Adrenal gland (tissue), 19 donors: ENCODE measurements at regions of chr1 and their contacts with region 1.

Region 1: DNA sequence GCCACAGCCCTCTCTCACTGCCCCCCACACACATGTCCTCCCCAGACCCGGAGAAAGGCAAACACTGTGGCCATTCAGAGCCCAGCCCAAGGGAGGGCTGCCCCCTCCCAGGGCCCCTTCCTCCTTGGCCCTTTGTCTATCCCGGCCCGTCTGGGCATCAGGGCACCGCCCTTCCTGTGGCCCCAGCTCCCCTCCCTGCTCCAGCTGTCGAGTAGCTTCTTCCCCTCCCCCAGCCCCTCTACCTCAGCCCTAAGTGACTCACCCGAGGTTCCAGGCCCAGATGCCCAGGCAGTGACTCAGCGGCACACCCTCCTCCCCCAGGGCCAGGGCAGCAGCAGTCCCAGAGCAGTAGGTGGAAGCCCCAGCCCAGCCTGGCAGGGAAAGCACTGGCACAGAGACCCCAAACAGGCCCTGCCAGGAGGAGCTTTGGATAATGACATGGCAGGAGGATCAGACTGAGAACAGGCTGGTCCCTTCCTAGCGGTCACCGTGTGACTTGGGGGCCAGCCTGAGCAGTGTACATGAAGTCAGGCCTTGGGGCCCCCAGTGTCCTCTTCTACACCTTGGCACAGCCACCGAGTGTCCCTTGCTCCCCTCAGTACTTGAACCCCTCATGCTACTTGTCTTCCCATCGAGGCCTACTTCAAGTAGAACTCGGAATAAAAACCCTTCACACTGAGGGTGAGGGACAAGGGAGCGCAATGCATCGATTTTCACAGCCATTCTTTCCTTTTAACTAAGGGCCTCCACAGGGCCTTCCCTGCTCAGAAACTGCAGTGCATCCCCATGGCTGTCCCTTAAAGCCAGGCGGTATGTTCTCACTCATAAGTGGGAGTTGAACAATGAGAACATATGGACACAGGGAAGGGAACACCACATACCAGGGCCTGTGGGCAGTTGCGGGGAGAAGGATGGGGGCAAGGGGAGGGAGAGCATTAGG is 1.1 kb upstream of the S100A2 start:
- DNase-seq: peak; percentile 96 to 99 (median 99)
- H3K4me3 ChIP-seq: no peak overlapping the region
- H3K27ac ChIP-seq: peak overlapping the region; percentile 23 to 96 (median 90)
- H3K4me1 ChIP-seq: peaks cover 26 to 34% of the 10 kb centered on the region in 2 donors
- H3K27me3 ChIP-seq: no peaks in the 10 kb centered on the region
- CTCF ChIP-seq: no peak
- POLR2A ChIP-seq: peak; percentile 21 to 83

Region 2: GRCh38 chr1:153122831-153123421 is 443.8 kb before region 1 on chr1:
- intact Hi-C with region 1: no loop called
- DNase-seq: no peak
- H3K4me3 ChIP-seq: no peak overlapping the region
- H3K27ac ChIP-seq: no peak overlapping the region
- H3K4me1 ChIP-seq: no peaks in the 10 kb centered on the region
- H3K27me3 ChIP-seq: no peaks in the 10 kb centered on the region
- CTCF ChIP-seq: no peak
- POLR2A ChIP-seq: no peak

Region 3: DNA sequence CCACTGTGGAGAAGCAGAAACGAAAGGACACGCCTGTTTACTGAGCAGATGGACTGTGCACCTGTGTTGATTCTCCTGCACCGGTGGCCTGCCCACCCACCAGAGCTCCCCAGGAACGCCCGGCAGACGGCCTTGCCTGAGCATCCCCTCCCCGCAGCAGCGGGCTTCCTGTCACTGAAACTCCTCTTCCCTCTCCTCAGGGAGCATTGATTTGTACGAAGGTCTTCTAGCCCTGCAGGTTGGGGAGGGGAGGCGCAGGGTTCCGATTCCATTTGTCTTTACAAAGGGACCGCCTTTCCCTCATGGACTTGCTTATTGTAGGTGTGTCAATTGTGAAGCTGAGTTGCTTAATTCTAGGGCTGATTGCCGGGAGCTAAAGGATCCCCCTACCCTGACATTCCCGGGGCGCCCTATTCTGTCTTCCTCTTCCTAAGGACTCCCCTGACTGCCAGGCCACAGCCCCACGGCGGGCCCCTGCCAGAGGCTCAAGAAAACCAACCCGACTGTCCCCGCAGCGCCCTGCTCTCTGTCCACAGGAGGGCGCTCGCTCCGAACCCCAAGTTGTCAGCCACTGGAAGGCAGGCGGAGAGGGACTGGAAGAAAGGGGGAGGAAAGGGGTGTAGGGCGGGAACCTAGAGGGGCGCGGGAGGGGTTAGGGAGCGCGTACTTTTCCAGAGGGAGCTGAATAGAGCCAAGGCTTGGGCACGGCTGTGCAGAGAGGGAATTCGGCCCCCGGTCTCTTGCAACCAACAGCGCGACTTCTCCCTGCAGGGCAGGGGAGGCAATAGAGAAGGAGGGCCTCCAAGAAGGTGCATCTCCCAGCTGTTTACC is 33.7 kb before region 1 on chr1:
- intact Hi-C with region 1: loop called (anchors 2 to 5 kb)
- DNase-seq: peak; percentile 69 to 92 (median 78)
- H3K4me3 ChIP-seq: peak overlapping the region in 1 of 4 donors; percentile 65
- H3K27ac ChIP-seq: peak overlapping the region in 3 of 5 donors; percentile 42 to 94 (median 93)
- H3K4me1 ChIP-seq: peaks cover 22 to 35% of the 10 kb centered on the region in 2 donors
- H3K27me3 ChIP-seq: no peaks in the 10 kb centered on the region
- CTCF ChIP-seq: peak; percentile 63 to 89 (median 74)
- POLR2A ChIP-seq: peak in 1 of 2 donors; percentile 1

Region 4: DNA sequence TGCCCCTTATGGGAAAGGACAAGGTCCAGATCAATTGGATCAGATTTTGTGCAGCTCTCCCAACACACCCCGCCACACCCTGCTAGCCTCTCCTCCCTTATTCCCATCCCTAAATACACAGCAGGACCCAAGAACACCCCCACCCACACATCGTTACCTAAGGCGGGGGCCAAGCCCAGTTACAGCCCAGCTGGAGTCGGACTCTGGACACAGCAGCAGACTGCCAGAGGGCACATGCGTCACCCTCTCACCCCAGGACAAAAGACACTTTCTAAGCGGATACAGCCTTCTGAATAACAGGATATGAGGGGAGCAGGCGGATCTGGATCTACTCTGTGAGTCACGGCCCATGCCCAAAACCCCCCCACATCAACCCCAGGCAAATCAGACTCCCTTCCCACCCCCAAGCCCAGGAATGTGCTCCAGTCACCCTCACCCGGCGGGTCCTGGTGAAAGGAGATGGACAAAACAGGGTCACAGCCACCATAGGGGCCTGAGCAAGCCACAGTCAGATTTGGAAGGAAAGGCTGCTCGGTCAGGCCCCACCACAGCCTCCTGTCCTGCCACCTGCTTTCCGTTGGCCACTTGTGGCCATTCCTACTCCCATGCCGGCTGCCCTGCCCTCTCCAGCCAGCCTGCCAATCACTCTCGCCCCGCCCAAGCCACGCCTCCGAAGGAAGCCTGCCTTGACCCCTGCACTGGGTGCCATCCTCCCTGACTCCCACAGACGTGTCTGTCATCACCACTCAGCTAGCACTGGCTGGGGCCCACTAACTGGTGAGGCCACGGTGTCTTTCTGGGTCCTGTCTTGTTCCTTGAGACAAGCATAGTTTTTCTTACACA is 42.3 kb after region 1 on chr1:
- intact Hi-C with region 1: no loop called
- DNase-seq: peak; percentile 63 to 86 (median 71)
- H3K4me3 ChIP-seq: peak overlapping the region in 1 of 4 donors; percentile 36
- H3K27ac ChIP-seq: peak overlapping the region; percentile 20 to 93 (median 58)
- H3K4me1 ChIP-seq: peaks cover 0 to 27% of the 10 kb centered on the region in 2 donors
- H3K27me3 ChIP-seq: no peaks in the 10 kb centered on the region
- CTCF ChIP-seq: no peak
- POLR2A ChIP-seq: peak in 1 of 2 donors; percentile 25

Region 5: DNA sequence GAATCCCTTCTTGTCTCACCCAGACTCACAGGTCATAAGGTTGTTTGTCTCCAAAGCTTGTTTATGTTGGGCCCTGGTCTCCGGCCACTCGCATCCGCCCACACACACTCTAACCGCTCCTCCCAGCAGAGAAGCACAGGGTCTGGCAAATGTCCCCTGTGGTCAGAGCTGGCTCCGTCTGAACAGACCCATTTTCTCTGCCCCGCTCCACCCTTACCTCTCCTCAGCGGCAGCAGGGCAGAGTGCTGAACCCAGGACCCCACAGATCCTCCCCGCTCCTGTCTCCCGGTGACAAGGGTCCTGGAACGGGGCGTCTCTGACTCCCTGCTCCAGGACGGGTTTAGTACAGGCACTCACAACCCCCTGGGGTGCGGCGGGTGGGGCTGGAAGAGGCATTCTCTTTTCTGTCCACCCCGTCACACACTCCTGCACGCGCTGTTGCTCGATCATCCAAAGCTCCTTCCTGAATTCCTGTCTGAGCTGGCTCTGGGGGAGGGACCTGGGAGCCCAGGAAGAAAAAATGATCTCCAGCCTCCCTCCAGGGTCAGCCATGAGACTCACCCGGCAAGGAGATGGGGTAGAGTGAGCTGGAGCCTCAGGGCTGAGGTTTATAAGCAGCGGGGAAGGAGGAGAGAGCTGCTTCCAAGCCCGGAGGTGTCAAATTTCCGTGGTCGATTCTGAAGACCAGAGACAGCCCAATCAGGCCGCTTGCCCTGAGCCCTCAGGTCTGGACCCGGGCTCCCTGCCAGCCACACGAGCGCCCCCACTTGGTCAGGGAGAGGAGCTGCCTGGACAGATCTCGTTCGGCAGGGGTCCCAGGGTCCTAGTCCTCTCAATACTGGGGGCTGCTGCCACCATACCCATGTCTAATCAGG is 60.4 kb after region 1 on chr1 and contains the start of gene S100A13:
- intact Hi-C with region 1: no loop called
- DNase-seq: peak; percentile 74 to 93 (median 86)
- H3K4me3 ChIP-seq: peak within 1 kb of the TSS in 3 of 4 donors; percentile 30 to 52 (median 41)
- H3K27ac ChIP-seq: peak within 1 kb of the TSS in 4 of 5 donors; percentile 39 to 91 (median 72)
- H3K4me1 ChIP-seq: peaks cover 11 to 24% of the 10 kb centered on the region in 2 donors
- H3K27me3 ChIP-seq: no peaks in the 10 kb centered on the region
- CTCF ChIP-seq: peak; percentile 43 to 69 (median 54)
- POLR2A ChIP-seq: peak in 1 of 2 donors; percentile 61
- total RNA-seq, gene S100A13: 57.6 to 289 (median 126) TPM

Region 6: DNA sequence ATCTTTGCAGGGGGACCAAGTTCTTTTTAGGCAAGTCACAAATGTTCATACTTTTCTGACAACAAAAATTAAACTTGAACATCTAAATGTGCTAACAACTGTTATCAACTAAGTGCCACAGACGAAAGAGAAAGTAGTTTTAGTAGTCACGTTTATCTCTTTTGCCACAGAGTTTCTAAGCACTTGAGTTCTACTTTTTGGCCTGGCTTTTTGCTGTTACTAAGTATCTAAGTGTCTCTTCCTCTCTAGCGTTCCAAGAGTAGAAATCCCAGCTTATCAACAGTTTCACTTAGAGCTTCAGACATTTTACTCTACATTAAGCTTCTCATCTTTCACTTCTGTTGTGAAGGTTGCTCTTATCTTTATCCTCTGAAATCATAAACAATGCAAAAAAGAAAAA is 321.8 kb after region 1 on chr1:
- intact Hi-C with region 1: no loop called
- DNase-seq: no peak
- H3K4me3 ChIP-seq: no peak overlapping the region
- H3K27ac ChIP-seq: peak overlapping the region in 1 of 5 donors; percentile 40
- H3K4me1 ChIP-seq: peaks cover 0 to 21% of the 10 kb centered on the region in 2 donors
- H3K27me3 ChIP-seq: no peaks in the 10 kb centered on the region
- CTCF ChIP-seq: no peak
- POLR2A ChIP-seq: no peak